Activated CD4-positive, alpha-beta T cell treated with anti-CD3 and anti-CD28 coated beads, Interleukin-2, amount 10 ng/mL, durations not matched to agents 7 days and 5 days (primary cell): ENCODE measurements at regions of chr9 and their contacts with region 1.

Region 1: DNA sequence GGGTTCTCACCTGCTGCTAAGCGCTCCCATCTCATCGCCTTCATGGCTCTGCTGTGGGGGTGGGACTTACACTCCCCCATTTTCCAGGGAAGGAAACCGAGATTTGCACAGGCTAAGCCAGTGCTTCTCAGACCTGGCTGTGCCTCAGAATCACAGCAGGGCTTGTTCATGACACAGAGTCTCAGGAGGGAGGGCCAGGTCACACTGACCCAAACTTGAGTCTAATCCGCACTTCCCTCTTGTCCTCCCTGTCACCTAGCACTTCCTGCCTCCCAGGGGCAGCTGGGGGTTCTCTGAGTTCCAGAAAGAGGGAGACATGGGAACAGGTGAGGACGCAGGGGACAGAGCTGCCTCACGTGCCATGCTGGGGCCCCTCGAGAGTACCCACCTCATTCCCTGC is 15.6 kb upstream of the IER5L start:
- DNase-seq: no peak
- H3K4me3 Mint-ChIP-seq: no peak overlapping the region
- H3K27ac Mint-ChIP-seq: no peak overlapping the region
- H3K4me1 Mint-ChIP-seq: peaks cover 2% of the 10 kb centered on the region
- H3K27me3 Mint-ChIP-seq: peaks cover 11% of the 10 kb centered on the region

Region 2: DNA sequence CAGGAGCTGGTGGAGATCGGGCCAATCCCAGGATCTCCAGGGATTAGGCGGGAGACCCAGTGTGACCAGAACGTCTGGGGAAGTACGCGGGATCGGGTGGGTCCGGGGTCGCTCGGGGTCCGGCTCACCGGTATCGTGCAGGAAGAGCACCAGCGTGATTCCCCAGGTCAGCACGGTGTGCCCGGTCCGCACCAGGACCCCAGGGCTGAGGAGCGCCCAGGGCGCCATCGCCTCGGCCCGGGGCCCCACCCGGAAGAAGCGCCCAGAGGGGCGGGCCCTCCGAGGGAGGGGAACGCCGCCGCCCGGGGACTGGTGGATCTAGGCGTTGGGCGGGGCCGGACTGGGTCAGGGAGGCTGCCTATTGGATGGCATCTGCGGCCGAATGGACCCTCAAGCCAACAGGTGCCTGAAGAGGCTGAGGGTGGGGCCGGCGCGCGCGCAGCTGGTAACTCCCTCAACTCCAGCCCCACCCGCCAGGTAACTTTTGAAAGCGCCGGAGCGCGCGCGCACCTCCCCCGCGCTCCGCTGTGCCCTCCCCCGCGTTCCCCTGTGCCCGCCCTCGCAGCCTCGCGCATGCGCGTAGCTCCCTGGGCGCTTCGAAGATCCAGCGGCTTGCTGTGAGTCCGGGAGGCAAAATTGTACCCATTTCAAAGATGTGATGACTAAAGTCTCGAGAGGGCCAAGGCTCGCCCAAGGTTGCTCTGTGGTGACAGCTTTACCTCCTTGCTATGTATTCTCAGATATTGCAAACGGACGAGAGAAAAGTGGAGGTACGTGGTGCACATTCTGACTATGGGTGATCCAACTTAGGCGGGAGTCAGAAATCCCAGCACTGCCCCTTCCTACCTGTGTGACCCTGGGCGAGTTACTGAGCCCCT is 469.6 kb before region 1 on chr9 and contains the start of gene ZDHHC12:
- CTCF ChIA-PET with region 1: no interaction called
- POLR2A ChIA-PET with region 1: no interaction called
- DNase-seq: peak; percentile 100
- H3K4me3 Mint-ChIP-seq: peak within 1 kb of the TSS; percentile 94
- H3K27ac Mint-ChIP-seq: peak within 1 kb of the TSS; percentile 94
- H3K4me1 Mint-ChIP-seq: peaks cover 53% of the 10 kb centered on the region
- H3K27me3 Mint-ChIP-seq: no peaks in the 10 kb centered on the region
- total RNA-seq, gene ZDHHC12: 86.3 to 91.5 TPM

Region 3: DNA sequence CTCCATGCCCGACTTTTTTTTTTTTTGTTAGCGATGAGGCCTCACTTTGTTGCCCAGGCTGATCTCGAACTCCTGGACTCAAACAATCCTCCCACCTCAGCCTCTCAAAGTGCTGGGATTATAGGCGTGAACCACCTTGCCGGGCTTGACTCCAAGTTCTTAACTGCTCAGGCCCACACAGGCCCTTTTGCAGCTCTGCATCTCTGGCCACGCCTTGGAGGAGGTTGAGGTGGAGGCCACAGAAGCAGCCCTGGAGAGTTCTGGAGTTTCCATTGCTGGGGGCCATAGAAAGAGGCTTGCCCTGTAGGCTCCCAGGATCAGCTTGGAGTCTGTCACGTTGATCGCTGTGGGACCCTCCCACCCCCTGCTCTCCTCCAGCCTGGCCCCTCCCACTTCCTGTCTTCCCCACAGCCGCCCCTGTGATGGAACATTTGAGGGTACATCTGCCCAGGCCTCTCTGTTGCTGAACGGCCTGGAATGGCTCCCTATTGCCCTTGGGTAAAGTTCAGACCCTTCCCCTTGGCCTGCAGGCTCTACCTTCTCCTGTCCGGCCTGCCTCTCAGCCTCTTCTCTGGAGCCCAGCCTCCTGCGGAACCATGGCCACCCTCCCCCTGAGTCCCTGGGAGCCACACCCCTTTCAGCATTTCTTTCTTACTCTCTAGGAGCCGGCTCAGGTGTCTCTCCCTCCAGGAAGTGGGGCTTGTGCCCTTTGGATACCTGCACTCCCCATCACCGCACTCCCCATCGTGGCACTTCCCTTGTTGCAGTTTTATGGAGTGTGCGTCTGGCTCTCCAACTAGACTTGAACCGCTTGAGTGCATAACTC is 14.8 kb after region 1 on chr9:
- CTCF ChIA-PET with region 1: no interaction called
- POLR2A ChIA-PET with region 1: interaction called, 16 read pairs
- DNase-seq: peak; percentile 45
- H3K4me3 Mint-ChIP-seq: no peak overlapping the region
- H3K27ac Mint-ChIP-seq: peak overlapping the region; percentile 80
- H3K4me1 Mint-ChIP-seq: peaks cover 25% of the 10 kb centered on the region
- H3K27me3 Mint-ChIP-seq: no peaks in the 10 kb centered on the region